ENCODE measurements at regions of chr12 and their contacts with region 1.

Region 1: GRCh38 chr12:8081251-8081920 is 688 bp upstream of the NECAP1 start:
- DNase-seq: no peak
- ATAC-seq: no peak

Region 2: DNA sequence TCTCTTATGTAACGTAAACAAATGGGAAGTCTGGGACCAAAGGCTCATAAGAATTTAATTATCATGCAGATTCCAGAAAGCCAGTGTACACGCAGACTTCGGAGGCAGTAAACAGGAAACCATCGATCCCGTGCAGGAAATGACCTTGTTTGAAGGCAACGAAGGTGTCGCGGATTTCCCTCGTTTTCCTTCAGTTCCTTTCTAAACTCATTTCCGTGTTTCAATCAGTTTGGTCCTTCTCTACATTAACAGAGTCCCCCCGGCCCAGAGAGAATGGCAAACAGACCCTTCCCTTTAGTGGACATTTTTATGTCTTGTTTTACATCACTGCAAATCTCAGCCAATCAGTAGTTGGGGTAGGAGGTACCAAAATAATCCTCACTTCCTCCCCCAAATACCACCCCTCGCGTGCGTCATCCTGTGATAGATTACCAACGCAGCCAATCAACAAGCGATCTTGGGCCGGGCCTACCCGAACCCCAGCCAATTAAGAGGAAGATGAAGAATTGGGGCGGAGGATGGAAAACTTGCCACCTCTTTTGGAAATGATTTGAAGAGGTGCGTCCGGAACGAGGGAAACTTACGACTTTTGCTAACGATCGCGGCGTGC is 55.0 kb before region 1 on chr12:
- intact Hi-C with region 1: loop called (anchors 2 kb)
- DNase-seq: peak; percentile 96
- ATAC-seq: peak; percentile 99

Measured in Right ventricle myocardium inferior (tissue), 1 donor.